H1 (cell line): ENCODE measurements at regions of chr6 and their contacts with region 1.

Region 1: GRCh38 chr6:8219352-8219943 is 117.1 kb upstream of the EEF1E1 start:
- DNase-seq: peak in 1 of 2 experiments; percentile 59
- H3K4me3 ChIP-seq: no peak overlapping the region
- H3K27ac ChIP-seq: no peak overlapping the region
- H3K4me1 ChIP-seq: no peaks in the 10 kb centered on the region
- H3K27me3 ChIP-seq: no peaks in the 10 kb centered on the region
- CTCF ChIP-seq: peak in 2 of 3 experiments; percentile 64 to 72; a peak in 3 of 4 replicates
- EP300 ChIP-seq: no peak
- POLR2A ChIP-seq: no peak
- RAD21 ChIP-seq: peak; percentile 86 to 88

Region 2: GRCh38 chr6:8131256-8131897 is 88.1 kb before region 1 on chr6:
- CTCF ChIA-PET with region 1: interaction called, 191 read pairs
- POLR2A ChIA-PET with region 1: no interaction called
- DNase-seq: peak; percentile 31 to 78
- H3K4me3 ChIP-seq: no peak overlapping the region
- H3K27ac ChIP-seq: no peak overlapping the region
- H3K4me1 ChIP-seq: no peaks in the 10 kb centered on the region
- H3K27me3 ChIP-seq: no peaks in the 10 kb centered on the region
- CTCF ChIP-seq: peak; percentile 30 to 83 (median 73)
- EP300 ChIP-seq: no peak
- POLR2A ChIP-seq: no peak
- RAD21 ChIP-seq: peak; percentile 96 to 97

Region 3: DNA sequence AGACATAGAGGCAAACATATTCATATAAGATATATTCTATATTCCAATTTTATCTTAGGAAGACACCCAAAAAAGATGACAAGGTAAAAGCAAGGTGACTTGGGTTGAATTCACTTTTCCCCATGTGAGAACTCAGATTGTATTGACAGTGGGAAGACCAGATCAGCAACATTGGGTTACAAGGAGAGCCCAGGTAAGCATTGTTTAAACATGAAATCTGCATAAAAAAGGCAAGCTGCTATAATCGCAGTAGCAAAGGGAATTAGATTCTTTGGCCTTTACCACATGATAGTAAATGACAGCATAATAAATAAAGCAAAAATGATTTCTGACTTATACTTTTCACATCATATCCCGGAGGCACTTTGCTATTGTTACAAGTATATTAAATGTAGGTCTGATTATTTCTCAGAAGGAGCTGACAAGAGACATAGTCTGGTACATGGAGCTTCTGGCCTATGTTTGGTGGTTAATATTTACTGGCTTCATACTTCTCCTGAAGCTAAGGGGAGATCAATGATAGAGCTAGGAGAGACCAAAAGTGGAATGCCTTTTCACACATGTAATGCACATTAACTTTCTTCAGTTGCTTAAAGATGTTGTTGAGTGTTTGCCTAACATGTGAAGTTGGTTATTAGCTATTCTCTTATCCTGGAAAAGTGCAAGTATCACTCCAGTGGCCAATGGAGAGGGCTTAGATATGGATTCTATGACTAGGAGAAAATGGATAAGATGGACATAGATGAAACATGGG is 64.0 kb before region 1 on chr6:
- CTCF ChIA-PET with region 1: interaction called, 16 read pairs
- POLR2A ChIA-PET with region 1: no interaction called
- DNase-seq: no peak
- H3K4me3 ChIP-seq: no peak overlapping the region
- H3K27ac ChIP-seq: no peak overlapping the region
- H3K4me1 ChIP-seq: peaks cover 0 to 10% (median 4%) of the 10 kb centered on the region in 4 experiments; a peak in 3 of 7 replicates
- H3K27me3 ChIP-seq: no peaks in the 10 kb centered on the region
- CTCF ChIP-seq: no peak
- EP300 ChIP-seq: no peak
- POLR2A ChIP-seq: no peak
- RAD21 ChIP-seq: no peak

Region 4: DNA sequence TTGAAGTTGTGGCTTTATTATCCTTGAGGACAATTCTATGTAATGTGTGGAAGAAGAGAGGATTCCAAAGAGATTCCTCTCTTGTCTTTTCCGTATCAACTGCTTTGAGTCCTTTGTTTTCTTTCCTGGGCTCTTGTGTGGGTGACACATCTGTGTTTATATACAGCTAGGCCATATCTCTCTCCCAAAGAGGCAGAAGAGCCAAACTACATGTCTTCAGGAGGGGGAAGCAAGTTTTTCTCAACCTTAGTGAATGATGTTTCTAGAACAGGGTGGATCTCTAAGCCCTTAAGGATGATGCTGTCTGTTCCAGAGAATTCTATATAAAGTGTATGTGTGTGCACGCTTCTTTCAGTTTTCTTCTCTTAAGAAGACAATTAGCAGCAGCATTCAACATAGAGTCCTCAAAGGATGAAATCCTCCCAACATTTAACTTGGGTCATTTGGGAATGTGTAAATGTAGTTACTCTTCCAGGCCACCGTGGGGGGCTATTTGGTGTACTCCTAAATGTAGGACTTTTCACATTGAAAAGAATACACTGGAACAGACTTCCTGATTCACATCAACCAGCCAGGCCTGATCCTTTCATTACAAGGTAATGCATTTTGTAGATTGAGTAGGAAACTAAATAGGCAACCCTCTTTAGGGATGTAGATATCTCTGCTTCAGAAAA is 24.3 kb before region 1 on chr6:
- CTCF ChIA-PET with region 1: interaction called, 39 read pairs
- POLR2A ChIA-PET with region 1: no interaction called
- DNase-seq: no peak
- H3K4me3 ChIP-seq: no peak overlapping the region
- H3K27ac ChIP-seq: no peak overlapping the region
- H3K4me1 ChIP-seq: peaks cover 1 to 11% (median 7%) of the 10 kb centered on the region in 4 experiments; a peak in 5 of 7 replicates
- H3K27me3 ChIP-seq: no peaks in the 10 kb centered on the region
- CTCF ChIP-seq: peak in 2 of 3 experiments; percentile 29 to 45; a peak in 2 of 4 replicates
- EP300 ChIP-seq: no peak
- POLR2A ChIP-seq: no peak
- RAD21 ChIP-seq: peak; percentile 39 to 56

Region 5: GRCh38 chr6:8207200-8208191 is 12.0 kb before region 1 on chr6:
- CTCF ChIA-PET with region 1: interaction called, 24 read pairs
- POLR2A ChIA-PET with region 1: no interaction called
- DNase-seq: no peak
- H3K4me3 ChIP-seq: no peak overlapping the region
- H3K27ac ChIP-seq: no peak overlapping the region
- H3K4me1 ChIP-seq: no peaks in the 10 kb centered on the region
- H3K27me3 ChIP-seq: no peaks in the 10 kb centered on the region
- CTCF ChIP-seq: no peak
- EP300 ChIP-seq: no peak
- POLR2A ChIP-seq: no peak
- RAD21 ChIP-seq: no peak